Activated T-helper 2 cell treated with anti-CD3 and anti-CD28 coated beads, Interferon-gamma antibody, Interleukin-2, Interleukin-4, amounts not matched to agents 10 μg/mL and 5 μg/mL and 100 μg/mL, durations not matched to agents 14 hours and 24 hours and 36 hours (primary cell): ENCODE measurements at regions of chr6 and their contacts with region 1.

Region 1: DNA sequence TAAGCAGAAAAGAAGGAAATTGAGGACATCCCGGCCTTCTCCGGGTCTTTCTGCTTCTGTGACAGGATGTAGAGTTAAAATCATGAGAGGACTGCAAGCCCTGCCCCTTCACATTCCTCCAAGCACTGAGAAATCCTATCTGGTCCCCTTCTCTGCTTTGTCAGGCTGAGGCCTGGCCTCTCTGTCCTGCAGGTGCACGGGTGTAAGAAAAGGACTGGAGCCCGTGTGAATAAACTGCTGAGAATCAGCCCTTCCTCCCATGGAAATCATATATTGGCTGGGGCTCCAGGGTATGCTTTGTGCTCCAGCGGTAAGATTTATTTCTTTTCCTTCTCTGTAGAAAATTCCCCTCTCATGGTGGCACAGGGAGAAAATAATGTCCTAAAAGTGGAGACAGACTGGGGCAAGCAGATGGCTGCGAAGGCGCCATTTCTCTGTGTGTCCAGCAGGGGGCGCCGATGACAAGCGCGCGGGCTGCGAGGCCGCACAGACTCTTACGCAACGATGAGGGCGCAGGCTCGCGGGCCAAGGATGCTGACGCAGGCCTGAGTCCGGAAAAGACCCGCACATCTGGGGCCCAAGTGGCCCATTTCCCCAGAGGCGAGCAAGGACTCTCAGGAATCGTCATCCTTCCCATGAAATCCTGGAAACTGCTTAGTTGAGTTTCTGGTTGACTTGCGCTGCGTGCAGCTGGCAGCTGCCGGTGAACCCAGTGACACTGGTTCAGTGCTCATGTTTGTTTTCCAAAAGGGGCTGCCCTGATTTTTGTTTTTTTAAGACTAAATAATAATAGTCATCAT is 258.6 kb downstream of the ADGB start:
- DNase-seq: peak; percentile 63
- H3K4me3 Mint-ChIP-seq: no peak overlapping the region
- H3K27ac Mint-ChIP-seq: peak overlapping the region; percentile 72
- H3K4me1 Mint-ChIP-seq: peaks cover 34% of the 10 kb centered on the region
- H3K27me3 Mint-ChIP-seq: no peaks in the 10 kb centered on the region

Region 2: GRCh38 chr6:146950351-146950835 is 93.0 kb after region 1 on chr6:
- intact Hi-C with region 1: loop called (anchors 5 kb)
- DNase-seq: no peak
- H3K4me3 Mint-ChIP-seq: no peak overlapping the region
- H3K27ac Mint-ChIP-seq: peak overlapping the region; percentile 70
- H3K4me1 Mint-ChIP-seq: peaks cover 12% of the 10 kb centered on the region
- H3K27me3 Mint-ChIP-seq: no peaks in the 10 kb centered on the region

Region 3: GRCh38 chr6:147194652-147195411 is 337.5 kb after region 1 on chr6:
- intact Hi-C with region 1: loop called (anchors 2 kb)
- DNase-seq: no peak
- H3K4me3 Mint-ChIP-seq: no peak overlapping the region
- H3K27ac Mint-ChIP-seq: peak overlapping the region; percentile 78
- H3K4me1 Mint-ChIP-seq: peaks cover 22% of the 10 kb centered on the region
- H3K27me3 Mint-ChIP-seq: no peaks in the 10 kb centered on the region

Region 4: DNA sequence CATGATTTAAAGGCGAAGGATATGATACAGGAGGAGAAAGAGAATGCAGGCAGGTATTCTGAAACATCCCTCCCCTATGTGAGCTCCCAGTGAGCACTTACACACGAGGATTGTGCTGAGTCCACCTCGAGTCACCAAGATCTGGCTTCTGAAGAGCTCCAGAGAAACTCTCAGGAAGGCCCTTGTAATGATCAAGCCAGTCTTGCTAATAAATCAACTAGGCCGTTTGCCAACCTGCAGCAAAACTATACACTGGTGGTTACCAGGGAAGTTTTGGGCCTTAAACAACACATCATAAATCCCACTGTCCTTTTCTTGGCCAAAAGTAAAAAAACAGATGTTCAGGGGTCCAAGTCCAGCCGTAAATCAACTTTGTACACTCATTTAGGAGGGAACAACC is 426.1 kb after region 1 on chr6:
- intact Hi-C with region 1: loop called (anchors 2 kb)
- DNase-seq: no peak
- H3K4me3 Mint-ChIP-seq: no peak overlapping the region
- H3K27ac Mint-ChIP-seq: peak overlapping the region; percentile 55
- H3K4me1 Mint-ChIP-seq: peaks cover 46% of the 10 kb centered on the region
- H3K27me3 Mint-ChIP-seq: no peaks in the 10 kb centered on the region

Region 5: GRCh38 chr6:147506704-147507114 is 649.3 kb after region 1 on chr6:
- intact Hi-C with region 1: loop called (anchors 5 kb)
- DNase-seq: no peak
- H3K4me3 Mint-ChIP-seq: peak overlapping the region; percentile 62
- H3K27ac Mint-ChIP-seq: no peak overlapping the region
- H3K4me1 Mint-ChIP-seq: peaks cover 12% of the 10 kb centered on the region
- H3K27me3 Mint-ChIP-seq: peaks cover 51% of the 10 kb centered on the region